HEK293T (cell line): ENCODE measurements at regions of chr3 and their contacts with region 1.

Region 1: GRCh38 chr3:129183569-129184395 is at the start of gene CNBP:
- DNase-seq: peak; percentile 93

Region 2: DNA sequence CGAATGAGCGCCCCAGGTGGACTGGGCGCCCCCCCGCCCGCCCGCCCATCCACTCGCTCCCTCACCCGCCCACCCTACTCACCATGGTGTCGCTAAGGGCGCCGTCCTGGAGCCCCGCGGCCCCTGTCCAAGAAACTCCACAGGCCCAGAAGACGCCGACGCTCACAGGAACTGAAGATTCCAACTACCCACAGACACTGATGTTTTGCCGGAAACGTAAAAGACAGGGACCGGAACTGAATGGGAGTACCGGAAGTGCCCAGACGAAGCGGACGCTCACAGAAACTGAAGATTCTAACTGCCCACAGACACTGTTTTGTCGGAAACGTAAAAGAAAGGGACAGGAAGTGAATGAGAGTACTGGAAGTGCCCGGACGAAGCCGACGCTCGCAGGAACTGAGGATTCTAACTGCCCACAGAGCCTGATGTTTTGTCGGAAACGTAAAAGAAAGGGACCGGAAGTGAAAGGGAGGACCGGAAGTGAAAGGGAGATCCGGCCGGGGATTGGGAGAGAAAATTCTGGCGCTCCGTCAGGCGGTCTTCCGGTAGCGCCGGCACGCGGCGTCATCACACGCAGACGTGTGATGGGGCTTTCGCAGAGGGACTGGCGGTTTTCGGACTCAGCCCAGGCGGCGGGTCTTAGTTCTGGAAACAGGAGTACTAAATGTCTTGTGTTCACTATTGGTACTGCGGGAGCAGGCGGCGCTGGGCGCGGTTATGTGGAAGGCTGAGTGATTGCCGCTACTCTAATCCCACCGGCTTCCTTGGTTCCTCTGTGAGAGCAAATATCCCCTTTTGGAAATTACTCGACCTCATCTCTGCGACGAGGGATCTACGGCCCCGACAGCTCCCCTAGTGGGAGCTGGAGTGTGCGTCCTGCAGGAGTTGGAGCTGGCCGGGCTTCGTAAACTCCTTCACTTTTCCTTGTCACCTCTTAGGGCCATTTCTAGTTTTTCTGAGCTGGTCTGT is 22.6 kb before region 1 on chr3 and contains the start of gene ISY1:
- CTCF ChIA-PET with region 1: no interaction called
- POLR2A ChIA-PET with region 1: interaction called, 15 read pairs
- DNase-seq: peak; percentile 92

Region 3: GRCh38 chr3:129195731-129196256 is 12.0 kb after region 1 on chr3:
- CTCF ChIA-PET with region 1: no interaction called
- POLR2A ChIA-PET with region 1: interaction called, 13 read pairs
- DNase-seq: no peak